ENCODE measurements at regions of chr6 and their contacts with region 1.

Region 1: DNA sequence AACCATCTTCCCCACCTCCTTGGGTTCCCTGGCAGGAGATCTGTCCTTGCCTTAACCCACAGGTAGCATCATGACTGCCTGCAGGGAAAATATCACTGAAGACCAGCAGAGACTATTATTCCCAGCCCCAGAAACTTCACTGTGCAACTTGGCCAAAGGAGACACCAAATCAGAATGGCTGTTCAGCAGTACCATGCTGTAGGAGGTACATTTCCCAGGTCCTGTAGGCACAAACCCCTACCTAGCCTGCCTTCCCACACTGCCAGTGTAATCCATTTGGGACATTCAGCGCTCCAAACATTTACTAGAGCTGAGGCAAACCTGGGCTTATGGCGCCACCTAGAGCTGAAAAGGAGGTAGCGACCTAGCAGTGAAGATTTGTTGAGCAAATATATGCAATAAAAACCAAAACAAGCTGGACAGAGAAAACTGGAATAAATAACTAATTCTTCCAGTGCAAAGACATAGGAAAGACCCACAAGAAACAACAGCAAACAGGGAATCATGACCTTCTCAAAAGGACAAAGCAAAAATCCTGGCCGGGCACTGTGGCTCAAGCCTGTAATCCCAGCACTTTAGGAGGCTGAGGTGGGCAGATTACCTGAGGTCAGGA is 60.3 kb downstream of the VTA1 start:
- DNase-seq: no peak

Region 2: GRCh38 chr6:142112451-142113061 is 94.8 kb before region 1 on chr6:
- intact Hi-C with region 1: no loop called
- DNase-seq: no peak

Region 3: GRCh38 chr6:142146828-142147662 is 60.3 kb before region 1 on chr6 and contains the starts of genes NMBR and VTA1:
- intact Hi-C with region 1: loop called (anchors 5 kb)
- DNase-seq: peak; percentile 99
- total RNA-seq, gene NMBR: not detected
- total RNA-seq, gene VTA1: 34.1 TPM